ENCODE measurements at regions of chr1 and their contacts with region 1.

Region 1: DNA sequence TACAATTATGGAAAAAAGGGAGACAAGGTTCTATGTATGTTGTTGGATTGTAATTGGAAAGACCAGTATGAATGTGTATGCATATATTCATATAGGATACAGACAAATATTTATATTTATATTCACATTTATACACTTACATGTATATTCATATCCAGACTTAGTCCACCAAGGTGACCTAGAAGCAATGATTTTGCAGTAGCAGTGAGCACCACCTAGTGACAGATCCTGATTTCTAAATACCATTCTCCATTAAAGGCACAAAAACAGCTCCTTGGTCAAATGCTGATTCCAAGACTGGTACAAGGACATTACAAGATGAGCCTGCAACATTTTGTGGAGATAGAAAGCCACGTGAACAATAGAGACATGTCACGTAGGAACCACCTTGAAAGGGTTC is 153.4 kb downstream of the SDCCAG8 start:
- DNase-seq: no peak
- ATAC-seq: no peak
- H3K4me3 Mint-ChIP-seq: no peak overlapping the region
- H3K27ac Mint-ChIP-seq: no peak overlapping the region
- H3K4me1 Mint-ChIP-seq: peaks cover 29% of the 10 kb centered on the region
- H3K27me3 Mint-ChIP-seq: no peaks in the 10 kb centered on the region
- CTCF ChIP-seq: 0 out of 2 replicates have a peak, but pooled peaks have one; percentile 25

Region 2: DNA sequence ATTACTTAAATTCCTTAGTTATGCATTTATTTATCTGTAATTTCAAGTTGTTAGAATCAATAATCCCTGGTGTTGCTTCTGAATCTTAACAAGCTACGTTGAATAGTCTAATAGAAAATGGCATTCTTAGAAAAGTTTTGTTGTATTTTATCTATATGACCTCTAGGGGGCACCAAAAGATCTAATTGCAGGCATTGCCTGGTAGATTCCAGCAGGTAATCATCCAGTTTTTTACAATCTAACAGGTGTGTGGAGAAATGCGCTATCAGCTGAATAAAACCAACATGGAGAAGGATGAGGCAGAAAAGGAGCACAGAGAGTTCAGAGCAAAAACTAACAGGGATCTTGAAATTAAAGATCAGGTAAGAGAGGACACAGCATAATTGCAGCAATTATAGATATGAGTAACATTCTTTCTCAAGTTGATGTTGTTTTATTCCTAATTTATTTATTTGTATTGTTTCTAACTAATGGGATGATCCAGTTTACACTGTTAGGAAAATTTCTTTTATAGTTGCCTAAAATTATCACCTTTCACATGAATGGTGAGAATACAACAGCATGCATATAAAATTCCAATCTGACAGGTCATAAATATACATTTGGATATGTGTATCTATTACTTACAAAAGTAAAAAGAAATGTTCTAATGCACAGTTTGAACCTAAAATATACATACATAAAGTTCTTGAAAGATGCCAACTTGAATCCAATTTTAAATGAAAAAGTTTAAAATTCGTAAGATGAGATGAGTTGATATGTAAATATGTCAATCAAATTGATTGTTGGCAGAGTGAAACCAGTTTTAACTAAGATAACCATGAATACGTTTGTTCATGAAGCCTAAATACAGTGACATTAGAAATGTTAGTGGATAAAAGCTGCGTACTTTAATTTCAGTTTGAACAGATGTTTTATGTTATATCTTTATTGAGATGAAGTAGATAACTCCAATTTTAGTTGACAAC is 65.0 kb before region 1 on chr1:
- CTCF ChIA-PET with region 1: interaction called, 45 read pairs
- POLR2A ChIA-PET with region 1: no interaction called
- DNase-seq: no peak
- ATAC-seq: peak; percentile 44; the same call in 1 of the 2 replicates
- H3K4me3 Mint-ChIP-seq: no peak overlapping the region
- H3K27ac Mint-ChIP-seq: no peak overlapping the region
- H3K4me1 Mint-ChIP-seq: peaks cover 5% of the 10 kb centered on the region
- H3K27me3 Mint-ChIP-seq: no peaks in the 10 kb centered on the region
- CTCF ChIP-seq: peak; percentile 69